ENCODE measurements at regions of chr17 and their contacts with region 1.

Region 1: GRCh38 chr17:82781894-82782274 is 30.0 kb downstream of the TBCD start:
- DNase-seq: peak; percentile 82
- H3K4me3 ChIP-seq: no peak overlapping the region
- H3K27ac ChIP-seq: no peak overlapping the region
- H3K4me1 ChIP-seq: no peaks in the 10 kb centered on the region
- H3K27me3 ChIP-seq: no peaks in the 10 kb centered on the region
- CTCF ChIP-seq: peak; percentile 98

Region 2: DNA sequence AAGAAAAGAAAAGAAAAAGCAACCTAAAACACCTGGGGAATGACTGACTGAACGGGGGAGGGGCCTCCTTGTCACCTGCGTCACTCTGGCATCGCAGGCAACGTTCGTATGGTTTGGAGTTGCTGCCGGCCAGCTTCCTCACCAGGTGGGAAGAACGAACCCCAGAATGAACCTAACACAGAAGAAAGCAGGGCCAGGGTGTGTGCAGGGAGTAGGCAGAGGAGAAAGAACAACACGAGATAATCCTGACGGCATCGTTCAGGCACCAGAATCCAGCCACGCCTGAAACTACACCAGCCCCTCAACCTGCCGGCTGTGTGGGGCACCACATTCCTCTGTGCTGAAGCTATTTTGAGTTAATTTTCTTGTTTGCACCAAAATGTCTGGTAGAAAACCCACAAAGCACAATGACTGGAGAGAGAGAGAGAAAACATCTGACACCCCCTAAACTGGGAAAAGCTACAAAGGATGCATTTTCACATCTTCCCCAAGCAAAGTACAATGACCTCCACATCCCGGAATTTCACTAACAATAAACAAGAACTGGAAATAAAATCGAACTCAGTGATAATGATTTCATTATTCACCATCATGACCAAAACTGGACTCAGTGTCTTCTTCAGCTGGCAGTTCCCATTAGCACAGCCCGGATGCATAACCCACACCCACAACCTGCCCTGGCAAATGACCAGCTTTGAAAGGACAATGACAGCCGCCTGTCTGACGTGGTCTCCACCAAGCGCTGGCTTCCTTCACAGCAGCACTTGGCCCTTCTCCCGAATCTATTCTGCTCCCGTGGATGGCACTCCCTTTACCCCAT is 107.0 kb before region 1 on chr17:
- CTCF ChIA-PET with region 1: no interaction called
- POLR2A ChIA-PET with region 1: no interaction called
- intact Hi-C with region 1: no loop called
- DNase-seq: no peak
- H3K4me3 ChIP-seq: no peak overlapping the region
- H3K27ac ChIP-seq: no peak overlapping the region
- H3K4me1 ChIP-seq: no peaks in the 10 kb centered on the region
- H3K27me3 ChIP-seq: no peaks in the 10 kb centered on the region
- CTCF ChIP-seq: no peak

Region 3: GRCh38 chr17:82917691-82918345 is 135.9 kb after region 1 on chr17:
- CTCF ChIA-PET with region 1: no interaction called
- POLR2A ChIA-PET with region 1: no interaction called
- intact Hi-C with region 1: loop called (anchors 5 kb)
- DNase-seq: peak; percentile 41
- H3K4me3 ChIP-seq: no peak overlapping the region
- H3K27ac ChIP-seq: no peak overlapping the region
- H3K4me1 ChIP-seq: no peaks in the 10 kb centered on the region
- H3K27me3 ChIP-seq: no peaks in the 10 kb centered on the region
- CTCF ChIP-seq: peak; percentile 70

Region 4: DNA sequence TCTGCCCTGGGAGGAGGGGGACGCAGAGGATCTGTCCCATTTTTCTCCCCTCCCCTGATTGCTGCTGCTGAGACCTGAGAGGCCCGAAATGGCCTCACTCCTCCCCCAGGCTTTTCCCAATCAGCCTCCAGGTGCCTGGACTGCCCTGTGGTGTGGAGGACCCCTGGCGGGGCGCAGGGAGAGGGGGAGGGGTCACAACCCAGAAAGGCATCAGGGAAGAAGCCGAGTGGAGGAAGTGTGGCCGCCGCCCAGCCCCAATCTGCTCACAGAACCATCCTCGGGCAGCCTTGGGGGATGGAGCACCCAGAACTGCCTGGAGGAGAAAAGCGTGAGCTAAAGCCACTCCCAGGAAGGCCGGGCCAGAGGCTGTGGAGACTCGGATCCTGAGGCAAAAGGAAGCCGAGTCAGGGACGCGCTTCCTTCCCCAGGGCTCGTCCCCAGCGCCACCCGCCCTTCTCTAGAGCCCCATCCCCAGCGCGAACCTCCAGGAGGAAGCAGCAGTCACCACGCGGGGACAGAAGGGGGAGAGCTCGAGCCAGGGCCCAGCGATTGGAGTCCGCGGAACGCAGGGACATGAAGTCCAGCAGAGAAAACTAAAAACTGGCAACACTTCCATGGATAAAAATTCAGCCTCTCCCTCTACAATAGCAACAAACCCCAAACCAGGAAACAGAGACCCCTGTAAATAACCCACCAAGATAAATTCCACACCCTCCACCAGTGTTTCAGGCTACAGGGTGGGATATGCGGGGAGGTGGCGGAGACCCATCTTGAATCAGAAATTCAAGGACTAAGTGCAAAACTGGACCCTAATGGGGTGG is 181.2 kb after region 1 on chr17:
- CTCF ChIA-PET with region 1: no interaction called
- POLR2A ChIA-PET with region 1: no interaction called
- intact Hi-C with region 1: loop called (anchors 5 kb)
- DNase-seq: peak; percentile 62
- H3K4me3 ChIP-seq: no peak overlapping the region
- H3K27ac ChIP-seq: no peak overlapping the region
- H3K4me1 ChIP-seq: no peaks in the 10 kb centered on the region
- H3K27me3 ChIP-seq: no peaks in the 10 kb centered on the region
- CTCF ChIP-seq: peak; percentile 65